HEK293 (cell line): ENCODE measurements at regions of chr5 and their contacts with region 1.

Region 1: GRCh38 chr5:149035372-149035790 is 27.5 kb downstream of the SH3TC2 start:
- H3K4me3 ChIP-seq: no peak overlapping the region
- H3K27ac ChIP-seq: no peak overlapping the region
- H3K4me1 ChIP-seq: no peaks in the 10 kb centered on the region
- CTCF ChIP-seq: peak; percentile 53; the same call in 1 of the 2 replicates

Region 2: DNA sequence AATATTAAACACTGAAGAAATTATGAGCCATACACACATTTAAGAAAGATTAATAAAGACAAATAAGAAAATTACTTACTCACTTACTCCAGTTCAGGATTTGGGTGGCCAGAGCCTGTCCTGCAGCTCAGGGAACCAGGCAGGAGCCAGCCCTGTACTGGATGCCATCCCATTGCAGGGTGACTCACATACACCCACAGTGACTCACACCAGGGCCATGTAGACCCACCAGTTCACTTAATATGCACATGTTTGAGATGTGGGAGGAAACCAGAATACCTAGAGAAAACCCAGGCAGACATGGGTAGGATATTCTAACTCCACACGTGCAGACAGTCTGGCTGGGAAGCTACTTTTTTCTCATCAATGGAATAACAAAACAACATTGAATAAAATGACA is 258.6 kb before region 1 on chr5:
- CTCF ChIA-PET with region 1: interaction called, 14 read pairs
- POLR2A ChIA-PET with region 1: no interaction called
- H3K4me3 ChIP-seq: no peak overlapping the region
- H3K27ac ChIP-seq: no peak overlapping the region
- H3K4me1 ChIP-seq: no peaks in the 10 kb centered on the region
- CTCF ChIP-seq: no peak

Region 3: GRCh38 chr5:148952097-148952867 is 83.1 kb before region 1 on chr5:
- CTCF ChIA-PET with region 1: interaction called, 60 read pairs
- POLR2A ChIA-PET with region 1: no interaction called
- H3K4me3 ChIP-seq: no peak overlapping the region
- H3K27ac ChIP-seq: no peak overlapping the region
- H3K4me1 ChIP-seq: no peaks in the 10 kb centered on the region
- CTCF ChIP-seq: no peak

Region 4: GRCh38 chr5:148984333-148984732 is 51.0 kb before region 1 on chr5:
- CTCF ChIA-PET with region 1: interaction called, 11 read pairs
- POLR2A ChIA-PET with region 1: no interaction called
- H3K4me3 ChIP-seq: no peak overlapping the region
- H3K27ac ChIP-seq: no peak overlapping the region
- H3K4me1 ChIP-seq: peaks cover 2% of the 10 kb centered on the region; the same call in 1 of the 2 replicates
- CTCF ChIP-seq: no peak

Region 5: DNA sequence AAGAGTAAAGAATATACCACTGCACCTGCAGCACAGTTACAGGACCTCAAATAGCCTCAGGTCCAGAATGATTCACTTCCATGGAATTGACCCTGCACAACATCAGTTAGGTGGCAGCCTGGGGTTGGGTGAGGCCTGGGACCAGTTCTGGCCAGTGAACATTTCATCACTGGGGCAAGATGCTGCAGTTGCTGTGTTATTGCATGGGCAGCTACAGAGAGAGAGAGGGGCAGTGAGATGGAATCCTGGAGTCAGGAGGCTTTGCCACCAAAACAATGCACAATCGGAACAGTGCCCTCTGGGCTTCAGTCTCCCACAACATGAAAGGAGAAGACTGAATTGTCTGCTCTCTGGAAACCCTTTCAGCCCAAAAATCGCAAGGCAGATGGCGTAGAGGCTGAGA is 24.3 kb before region 1 on chr5:
- CTCF ChIA-PET with region 1: interaction called, 42 read pairs
- POLR2A ChIA-PET with region 1: no interaction called
- H3K4me3 ChIP-seq: no peak overlapping the region
- H3K27ac ChIP-seq: no peak overlapping the region
- H3K4me1 ChIP-seq: no peaks in the 10 kb centered on the region
- CTCF ChIP-seq: no peak

Region 6: DNA sequence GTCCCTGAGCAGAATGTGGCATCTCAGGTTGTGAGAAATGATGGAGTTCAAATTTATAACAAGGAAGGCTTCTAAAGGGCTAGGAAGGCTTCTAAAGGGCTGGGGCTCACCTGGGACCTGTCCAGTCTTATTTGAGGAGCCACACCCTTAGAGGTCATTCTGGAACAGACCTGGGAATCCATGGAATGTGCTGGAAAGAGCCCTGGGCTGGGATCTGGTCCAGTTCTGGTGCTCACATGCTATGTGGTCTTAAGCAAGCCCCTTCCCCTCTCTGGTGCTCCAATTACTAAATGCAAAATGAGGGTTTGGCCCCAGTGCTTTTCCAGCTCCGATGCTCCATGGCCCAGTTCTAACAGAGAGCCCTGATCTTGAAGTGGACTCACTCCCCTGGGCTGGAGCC is 209.0 kb after region 1 on chr5:
- CTCF ChIA-PET with region 1: no interaction called
- POLR2A ChIA-PET with region 1: no interaction called
- H3K4me3 ChIP-seq: no peak overlapping the region
- H3K27ac ChIP-seq: no peak overlapping the region
- H3K4me1 ChIP-seq: no peaks in the 10 kb centered on the region
- CTCF ChIP-seq: no peak

Region 7: GRCh38 chr5:149268928-149269557 is 233.7 kb after region 1 on chr5:
- CTCF ChIA-PET with region 1: interaction called, 11 read pairs
- POLR2A ChIA-PET with region 1: no interaction called
- H3K4me3 ChIP-seq: no peak overlapping the region
- H3K27ac ChIP-seq: no peak overlapping the region
- H3K4me1 ChIP-seq: peaks cover 3% of the 10 kb centered on the region; the same call in 1 of the 2 replicates
- CTCF ChIP-seq: peak; percentile 28